Common myeloid progenitor, CD34-positive (primary cell): ENCODE measurements at regions of chr17 and their contacts with region 1.

Region 1: DNA sequence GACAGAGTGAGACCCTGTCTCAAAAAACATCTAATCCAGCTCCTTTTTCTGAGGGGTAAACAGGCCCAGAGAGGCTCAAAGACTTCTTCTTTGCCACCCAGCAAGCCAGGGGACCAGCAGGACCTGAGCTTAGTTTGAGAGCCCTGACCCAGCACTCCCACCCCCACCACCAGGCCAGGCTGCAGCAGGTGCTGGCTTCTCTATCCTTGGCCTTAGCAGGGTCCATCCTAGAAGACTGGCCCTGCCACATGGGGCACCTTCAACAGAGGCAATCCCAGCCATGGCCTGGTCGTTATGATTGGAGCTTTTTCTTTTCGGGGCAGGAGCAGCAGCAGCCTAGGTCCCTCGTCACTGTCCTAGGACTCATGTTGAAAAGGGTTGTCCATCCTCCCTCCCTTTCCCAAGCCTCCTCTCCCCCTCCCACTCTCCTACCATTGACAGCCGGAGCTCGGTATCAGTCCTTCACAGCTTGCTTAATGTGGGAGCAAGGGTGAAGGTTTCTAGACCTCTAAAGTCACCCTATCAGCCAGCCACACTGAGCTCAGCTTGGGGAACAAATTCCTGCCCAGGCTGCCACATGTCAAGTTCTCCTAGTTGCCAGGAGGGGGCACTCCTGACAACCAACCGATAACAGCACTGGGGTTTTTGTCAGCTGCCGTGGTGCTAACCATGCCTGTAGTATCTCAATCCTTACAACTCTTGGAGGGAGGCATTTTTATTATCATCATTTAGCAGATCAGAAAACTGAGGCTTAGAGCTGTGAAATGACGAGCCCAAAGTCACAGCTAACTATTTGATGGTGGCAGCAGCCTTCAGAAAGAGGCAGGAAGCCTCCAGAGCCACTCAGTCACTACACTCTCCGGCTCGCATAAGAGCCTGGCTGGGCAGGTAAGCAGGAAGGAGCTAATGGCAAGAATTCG is 11.2 kb downstream of the MRPL27 start:
- DNase-seq: peak; percentile 69 to 86 (median 84)
- H3K4me3 ChIP-seq: no peak overlapping the region
- H3K27ac ChIP-seq: peak overlapping the region in 1 of 2 experiments; percentile 21
- H3K4me1 ChIP-seq: peaks cover 0 to 6% (median 4%) of the 10 kb centered on the region in 4 experiments
- H3K27me3 ChIP-seq: no peaks in the 10 kb centered on the region

Region 2: GRCh38 chr17:50345432-50346312 is 16.1 kb before region 1 on chr17 and contains the start of gene XYLT2:
- CTCF ChIA-PET with region 1: interaction called, 27 read pairs
- POLR2A ChIA-PET with region 1: interaction called, 3 read pairs
- DNase-seq: peak; percentile 83 to 94 (median 91)
- H3K4me3 ChIP-seq: peak within 1 kb of the TSS; percentile 67 to 89 (median 82)
- H3K27ac ChIP-seq: peak within 1 kb of the TSS in 1 of 2 experiments; percentile 70
- H3K4me1 ChIP-seq: peaks cover 0 to 30% (median 24%) of the 10 kb centered on the region in 4 experiments
- H3K27me3 ChIP-seq: no peaks in the 10 kb centered on the region

Region 3: DNA sequence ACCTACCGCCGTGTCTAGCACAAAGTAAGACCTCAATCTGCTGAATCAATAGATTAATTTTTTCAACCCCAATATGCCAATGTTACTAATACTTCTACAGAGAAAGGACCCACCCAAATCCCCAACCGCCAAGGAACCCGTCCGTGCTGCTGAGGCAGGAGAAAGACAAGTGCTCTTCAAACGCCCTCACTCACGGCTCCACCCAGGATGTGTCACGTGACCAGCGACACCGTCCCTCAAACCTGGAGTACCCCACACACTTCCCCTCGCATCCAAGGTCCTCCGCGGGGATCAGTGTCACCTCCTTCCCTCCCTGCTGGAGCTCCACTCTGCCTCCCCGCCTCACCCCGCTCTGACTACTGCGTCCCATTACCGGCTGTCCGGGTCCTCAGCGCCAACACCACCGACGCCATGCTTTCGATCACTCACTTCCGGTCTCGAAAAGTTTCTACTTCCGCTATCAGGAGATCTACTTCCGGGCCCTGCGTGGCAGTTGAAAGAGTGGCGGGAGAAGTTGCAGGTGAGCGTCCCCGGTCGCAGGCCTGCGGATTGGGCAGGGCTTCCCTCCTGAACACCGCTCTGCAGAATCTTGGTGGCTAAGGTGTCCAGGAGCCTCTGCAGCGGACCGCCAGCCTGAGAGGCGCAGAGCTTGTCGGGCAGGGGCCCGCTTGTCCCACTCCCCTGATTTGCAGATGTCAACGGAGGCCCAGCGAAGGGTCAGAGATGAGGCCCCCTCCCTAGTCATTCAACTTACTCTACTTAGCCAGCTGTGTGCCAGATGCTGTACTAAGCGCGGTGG is 11.1 kb after region 1 on chr17 and contains the starts of genes EME1 and MRPL27:
- CTCF ChIA-PET with region 1: interaction called, 24 read pairs
- POLR2A ChIA-PET with region 1: no interaction called
- DNase-seq: peak; percentile 86 to 90 (median 89)
- H3K4me3 ChIP-seq: peak within 1 kb of the TSS; percentile 69 to 99 (median 88)
- H3K27ac ChIP-seq: peak within 1 kb of the TSS; percentile 91 to 97
- H3K4me1 ChIP-seq: peaks cover 4 to 19% (median 15%) of the 10 kb centered on the region in 4 experiments
- H3K27me3 ChIP-seq: no peaks in the 10 kb centered on the region

Region 4: GRCh38 chr17:50380369-50381259 is 18.8 kb after region 1 on chr17:
- CTCF ChIA-PET with region 1: interaction called, 12 read pairs
- POLR2A ChIA-PET with region 1: no interaction called
- DNase-seq: peak in 2 of 3 donors; percentile 33 to 34
- H3K4me3 ChIP-seq: no peak overlapping the region
- H3K27ac ChIP-seq: no peak overlapping the region
- H3K4me1 ChIP-seq: no peaks in the 10 kb centered on the region
- H3K27me3 ChIP-seq: no peaks in the 10 kb centered on the region